ENCODE measurements at regions of chr2 and their contacts with region 1.

Region 1: DNA sequence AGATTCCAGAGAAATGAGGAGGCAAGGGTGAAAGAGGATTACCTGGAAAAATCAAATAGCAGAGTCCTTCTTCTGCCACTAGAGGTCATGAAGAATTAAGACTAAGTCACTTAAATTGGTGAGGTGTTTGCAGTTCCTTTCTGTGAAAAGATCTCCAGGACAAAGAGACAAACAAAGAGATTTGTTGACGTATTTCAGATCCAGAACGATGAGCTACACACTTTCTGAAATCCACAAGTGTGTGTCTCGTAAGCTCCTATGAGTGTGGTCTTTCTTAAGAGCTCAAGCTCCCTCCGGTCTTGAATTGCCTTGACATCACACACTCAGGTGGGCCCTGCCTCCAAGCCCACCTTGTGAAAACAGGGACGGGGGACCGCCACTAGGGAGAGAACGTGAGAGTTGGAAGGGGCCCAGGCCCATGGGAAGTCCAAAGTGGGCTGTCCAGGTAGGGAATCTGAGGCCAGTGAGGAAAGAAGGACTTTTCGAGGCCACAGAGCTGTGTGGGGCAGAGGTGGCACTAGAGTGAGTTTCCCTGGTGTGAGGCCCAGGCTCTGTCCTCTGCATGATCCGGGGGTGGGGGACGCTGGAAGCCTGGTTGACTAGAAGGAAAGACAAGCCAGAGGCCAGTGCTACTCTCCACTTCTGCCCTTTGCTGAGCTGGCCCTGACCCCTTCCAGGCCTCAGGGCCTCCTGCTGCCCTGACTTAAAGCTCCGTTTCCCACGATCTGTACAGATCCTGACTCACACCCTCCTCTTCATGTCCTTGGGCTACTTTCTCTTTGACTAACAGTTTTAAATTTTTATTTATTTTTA is 168.1 kb upstream of the NCK2 start:
- DNase-seq: no peak
- ATAC-seq: peak; percentile 31
- H3K4me3 ChIP-seq: no peak overlapping the region
- H3K27ac ChIP-seq: no peak overlapping the region
- H3K4me1 ChIP-seq: no peaks in the 10 kb centered on the region
- H3K27me3 ChIP-seq: no peaks in the 10 kb centered on the region

Region 2: GRCh38 chr2:105782123-105782522 is 205.5 kb after region 1 on chr2:
- intact Hi-C with region 1: loop called in 1 of 2 experiments (anchors 2 kb)
- DNase-seq: peak in 1 of 2 donors; percentile 57
- ATAC-seq: no peak
- H3K4me3 ChIP-seq: no peak overlapping the region
- H3K27ac ChIP-seq: no peak overlapping the region
- H3K4me1 ChIP-seq: no peaks in the 10 kb centered on the region
- H3K27me3 ChIP-seq: no peaks in the 10 kb centered on the region

Region 3: DNA sequence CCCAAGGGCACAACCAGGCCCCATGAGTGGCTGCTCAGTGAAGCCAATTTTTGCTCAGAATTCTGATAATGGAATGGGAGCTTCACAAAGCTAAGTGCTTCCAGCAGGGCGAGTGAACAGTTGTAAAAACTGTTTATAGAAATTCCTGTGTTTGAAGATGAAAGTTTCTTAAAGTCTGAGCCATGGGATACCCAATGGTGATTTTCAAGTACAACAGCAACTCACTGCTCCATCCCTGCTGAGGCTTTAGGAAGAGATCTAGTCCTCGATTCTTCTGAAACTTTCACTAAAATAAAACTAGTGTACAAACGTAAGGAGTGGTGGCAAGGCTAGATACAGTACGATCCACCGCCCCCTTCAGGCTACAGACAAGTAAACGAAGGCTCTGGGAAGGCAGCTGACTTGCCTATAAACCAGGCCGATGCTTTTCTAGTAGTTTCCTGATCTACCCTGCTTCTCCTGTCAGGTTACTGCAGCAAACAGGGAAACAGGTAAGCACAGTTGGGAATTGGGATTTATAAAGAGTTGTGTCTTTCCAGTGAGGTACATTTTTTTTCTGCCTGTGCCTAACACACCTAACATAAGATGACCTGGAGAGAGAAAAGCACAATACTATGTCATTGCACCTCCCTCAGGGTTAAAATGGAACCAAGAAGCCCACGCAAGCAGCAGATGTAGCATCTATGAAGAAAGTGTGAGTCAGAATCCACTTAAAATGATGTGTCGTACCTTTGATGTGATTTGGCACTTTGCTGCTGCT is 508.7 kb after region 1 on chr2:
- intact Hi-C with region 1: loop called (anchors 5 kb)
- DNase-seq: no peak
- ATAC-seq: no peak
- H3K4me3 ChIP-seq: no peak overlapping the region
- H3K27ac ChIP-seq: no peak overlapping the region
- H3K4me1 ChIP-seq: no peaks in the 10 kb centered on the region
- H3K27me3 ChIP-seq: no peaks in the 10 kb centered on the region

Measured in aorta (tissue), 5 donors.